ENCODE measurements at regions of chr2 and their contacts with region 1.

Region 1: DNA sequence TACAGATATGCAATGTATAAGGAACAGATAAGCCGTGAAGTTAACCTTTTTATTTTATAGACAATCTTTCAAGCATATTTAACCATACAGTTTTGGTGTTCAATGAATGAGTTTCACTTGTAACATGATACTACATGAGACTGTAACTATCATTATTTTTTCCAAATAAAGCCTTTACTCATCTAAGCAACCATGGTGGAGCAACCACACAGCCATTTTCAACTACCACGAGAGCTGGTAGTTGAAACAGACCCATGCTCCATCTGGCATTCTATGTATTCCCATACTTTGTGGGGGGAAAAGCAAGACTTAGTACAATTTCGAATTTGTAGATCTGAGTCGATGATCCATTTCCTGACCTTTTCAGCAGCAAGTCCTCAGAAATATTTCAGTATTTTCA is 159.3 kb upstream of the RND3 start:
- DNase-seq: no peak
- ATAC-seq: no peak
- H3K4me3 ChIP-seq: no peak overlapping the region
- H3K27ac ChIP-seq: no peak overlapping the region
- H3K4me1 ChIP-seq: peaks cover 0 to 7% (median 0%) of the 10 kb centered on the region in 9 donors
- H3K27me3 ChIP-seq: no peaks in the 10 kb centered on the region
- CTCF ChIP-seq: no peak

Region 2: GRCh38 chr2:150487537-150488429 is 159.0 kb before region 1 on chr2 and contains the start of gene RND3:
- intact Hi-C with region 1: no loop called
- DNase-seq: peak; percentile 91 to 98
- ATAC-seq: peak; percentile 72 to 84 (median 76)
- H3K4me3 ChIP-seq: peak within 1 kb of the TSS; percentile 51 to 91 (median 78)
- H3K27ac ChIP-seq: peak within 1 kb of the TSS; percentile 84 to 97 (median 95)
- H3K4me1 ChIP-seq: peaks cover 0 to 24% (median 19%) of the 10 kb centered on the region in 9 donors
- H3K27me3 ChIP-seq: peaks cover 0 to 38% (median 0%) of the 10 kb centered on the region in 7 donors
- CTCF ChIP-seq: peak; percentile 73 to 93 (median 84)
- total RNA-seq, gene RND3: 20.7 to 74.3 (median 41.0) TPM

Region 3: DNA sequence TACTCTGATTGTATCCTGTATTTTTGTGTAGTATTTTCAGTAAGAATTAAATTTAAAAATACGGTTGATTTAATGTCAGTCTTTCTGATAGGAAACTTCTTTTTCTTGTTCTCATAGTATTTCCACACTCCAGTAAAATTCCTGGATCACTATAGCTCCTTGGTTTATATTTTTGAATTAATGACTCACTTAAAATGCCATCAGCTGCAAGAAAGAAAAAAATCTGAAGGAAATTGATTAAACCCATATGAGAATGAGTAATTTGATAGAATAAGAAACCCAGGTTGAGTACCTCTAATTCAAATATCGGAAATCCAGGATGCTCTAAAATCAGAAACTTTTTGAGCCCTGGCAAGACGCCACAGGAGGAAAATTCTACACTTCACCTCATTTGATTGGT is 27.5 kb after region 1 on chr2:
- intact Hi-C with region 1: loop called in 1 of 10 experiments (anchors 1 kb)
- DNase-seq: no peak
- ATAC-seq: no peak
- H3K4me3 ChIP-seq: no peak overlapping the region
- H3K27ac ChIP-seq: no peak overlapping the region
- H3K4me1 ChIP-seq: no peaks in the 10 kb centered on the region
- H3K27me3 ChIP-seq: no peaks in the 10 kb centered on the region
- CTCF ChIP-seq: no peak

Region 4: DNA sequence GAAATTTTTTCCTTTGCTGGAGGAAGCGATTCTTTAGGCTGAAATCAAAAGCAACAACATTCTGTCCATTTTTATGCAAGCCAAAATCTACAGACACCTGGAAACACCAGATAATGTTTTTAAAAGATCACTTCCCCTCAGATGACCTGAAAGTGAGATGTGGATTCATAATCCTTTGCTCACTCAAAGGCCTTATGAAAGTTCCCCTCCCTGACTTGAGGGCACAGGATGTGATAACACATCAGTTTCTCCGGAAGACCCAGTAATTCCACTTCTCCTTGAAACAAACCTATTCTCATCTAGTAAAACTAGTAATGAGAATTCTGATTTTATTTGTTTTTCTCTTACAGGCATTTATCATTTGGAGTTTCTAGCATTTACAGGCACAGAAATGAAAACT is 59.0 kb after region 1 on chr2:
- intact Hi-C with region 1: no loop called
- DNase-seq: no peak
- ATAC-seq: no peak
- H3K4me3 ChIP-seq: no peak overlapping the region
- H3K27ac ChIP-seq: no peak overlapping the region
- H3K4me1 ChIP-seq: no peaks in the 10 kb centered on the region
- H3K27me3 ChIP-seq: no peaks in the 10 kb centered on the region
- CTCF ChIP-seq: no peak

Measured in heart right ventricle (tissue), 16 donors.